Mammary epithelial cell (primary cell): ENCODE measurements at regions of chr17 and their contacts with region 1.

Region 1: GRCh38 chr17:30021708-30022317 is 80.4 kb downstream of the EFCAB5 start:
- DNase-seq: peak; percentile 35
- H3K4me3 ChIP-seq: no peak overlapping the region
- H3K27ac ChIP-seq: no peak overlapping the region
- H3K4me1 ChIP-seq: no peaks in the 10 kb centered on the region
- H3K27me3 ChIP-seq: no peaks in the 10 kb centered on the region
- CTCF ChIP-seq: peak; percentile 80 to 90

Region 2: GRCh38 chr17:29807520-29808351 is 214.1 kb before region 1 on chr17:
- CTCF ChIA-PET with region 1: no interaction called
- dilution Hi-C with region 1: no loop called
- in situ Hi-C with region 1: no loop called
- intact Hi-C with region 1: loop called (anchors 1 kb)
- DNase-seq: peak; percentile 34
- H3K4me3 ChIP-seq: no peak overlapping the region
- H3K27ac ChIP-seq: no peak overlapping the region
- H3K4me1 ChIP-seq: peaks cover 11% of the 10 kb centered on the region
- H3K27me3 ChIP-seq: no peaks in the 10 kb centered on the region
- CTCF ChIP-seq: peak; percentile 76 to 83

Region 3: GRCh38 chr17:29844339-29845048 is 177.3 kb before region 1 on chr17:
- CTCF ChIA-PET with region 1: interaction called, 35 read pairs
- dilution Hi-C with region 1: no loop called
- in situ Hi-C with region 1: no loop called
- intact Hi-C with region 1: no loop called
- DNase-seq: no peak
- H3K4me3 ChIP-seq: no peak overlapping the region
- H3K27ac ChIP-seq: no peak overlapping the region
- H3K4me1 ChIP-seq: no peaks in the 10 kb centered on the region
- H3K27me3 ChIP-seq: no peaks in the 10 kb centered on the region
- CTCF ChIP-seq: no peak

Region 4: GRCh38 chr17:29867643-29868181 is 154.1 kb before region 1 on chr17:
- CTCF ChIA-PET with region 1: interaction called, 3 read pairs
- dilution Hi-C with region 1: no loop called
- in situ Hi-C with region 1: no loop called
- intact Hi-C with region 1: loop called (anchors 5 kb)
- DNase-seq: no peak
- H3K4me3 ChIP-seq: no peak overlapping the region
- H3K27ac ChIP-seq: no peak overlapping the region
- H3K4me1 ChIP-seq: peaks cover 8% of the 10 kb centered on the region
- H3K27me3 ChIP-seq: no peaks in the 10 kb centered on the region
- CTCF ChIP-seq: peak; percentile 11 to 33

Region 5: DNA sequence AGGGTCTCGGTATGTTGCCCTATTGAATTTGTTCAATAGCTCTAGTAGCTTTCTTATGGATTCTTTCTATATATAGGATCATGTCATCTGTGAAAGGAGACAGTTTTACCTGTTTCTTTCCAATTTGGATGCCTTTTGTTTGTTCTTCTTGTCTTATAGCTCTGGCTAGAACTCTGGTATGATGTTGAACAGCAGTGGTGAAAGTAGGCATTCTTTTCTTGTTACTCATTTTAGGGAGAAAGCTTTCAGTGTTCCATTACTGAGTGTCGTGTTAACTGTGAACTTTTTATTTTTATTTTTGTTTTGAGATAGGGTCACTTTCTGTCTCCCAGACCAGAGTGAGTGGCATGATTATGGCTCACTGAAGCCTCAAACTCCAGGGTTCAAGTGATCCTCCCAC is 59.2 kb before region 1 on chr17:
- CTCF ChIA-PET with region 1: no interaction called
- dilution Hi-C with region 1: no loop called
- in situ Hi-C with region 1: no loop called
- intact Hi-C with region 1: no loop called
- DNase-seq: no peak
- H3K4me3 ChIP-seq: no peak overlapping the region
- H3K27ac ChIP-seq: no peak overlapping the region
- H3K4me1 ChIP-seq: peaks cover 17% of the 10 kb centered on the region
- H3K27me3 ChIP-seq: no peaks in the 10 kb centered on the region
- CTCF ChIP-seq: no peak